ENCODE measurements at regions of chr17 and their contacts with region 1.

Region 1: DNA sequence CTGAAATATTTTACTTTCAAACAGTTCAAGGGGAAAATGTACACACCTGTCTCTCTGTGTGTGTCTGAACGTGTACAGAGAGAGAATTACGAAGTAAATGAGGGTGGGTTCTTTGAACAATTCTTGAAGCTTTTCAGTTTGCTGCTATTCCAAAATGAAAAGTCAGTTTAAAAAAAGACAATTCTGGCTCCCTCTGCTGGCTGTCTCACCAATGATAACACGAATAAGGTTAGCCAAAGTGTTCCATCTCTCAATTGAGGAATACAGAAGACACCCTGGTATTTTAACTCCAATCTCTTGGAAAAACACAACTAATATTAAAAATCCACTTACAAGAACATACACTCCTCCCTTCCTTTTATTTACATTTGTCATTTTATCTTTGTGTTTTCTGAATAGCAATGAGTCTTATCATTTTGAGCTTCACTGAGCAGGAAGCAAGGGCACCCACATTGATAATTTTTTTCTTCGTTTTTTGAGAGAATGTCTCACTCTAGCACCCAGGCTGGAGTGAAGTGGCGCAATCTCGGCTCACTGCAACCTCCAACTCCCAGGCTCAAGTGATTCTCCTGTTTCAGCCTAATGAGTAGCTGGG is 20.5 kb downstream of the EFTUD2 start:
- DNase-seq: no peak
- H3K4me3 Mint-ChIP-seq: no peak overlapping the region
- H3K27ac Mint-ChIP-seq: no peak overlapping the region
- H3K4me1 Mint-ChIP-seq: peaks cover 2% of the 10 kb centered on the region
- H3K27me3 Mint-ChIP-seq: no peaks in the 10 kb centered on the region

Region 2: GRCh38 chr17:44722254-44722653 is 156.5 kb before region 1 on chr17:
- CTCF ChIA-PET with region 1: no interaction called
- POLR2A ChIA-PET with region 1: no interaction called
- DNase-seq: no peak
- H3K4me3 Mint-ChIP-seq: no peak overlapping the region
- H3K27ac Mint-ChIP-seq: no peak overlapping the region
- H3K4me1 Mint-ChIP-seq: no peaks in the 10 kb centered on the region
- H3K27me3 Mint-ChIP-seq: no peaks in the 10 kb centered on the region

Region 3: DNA sequence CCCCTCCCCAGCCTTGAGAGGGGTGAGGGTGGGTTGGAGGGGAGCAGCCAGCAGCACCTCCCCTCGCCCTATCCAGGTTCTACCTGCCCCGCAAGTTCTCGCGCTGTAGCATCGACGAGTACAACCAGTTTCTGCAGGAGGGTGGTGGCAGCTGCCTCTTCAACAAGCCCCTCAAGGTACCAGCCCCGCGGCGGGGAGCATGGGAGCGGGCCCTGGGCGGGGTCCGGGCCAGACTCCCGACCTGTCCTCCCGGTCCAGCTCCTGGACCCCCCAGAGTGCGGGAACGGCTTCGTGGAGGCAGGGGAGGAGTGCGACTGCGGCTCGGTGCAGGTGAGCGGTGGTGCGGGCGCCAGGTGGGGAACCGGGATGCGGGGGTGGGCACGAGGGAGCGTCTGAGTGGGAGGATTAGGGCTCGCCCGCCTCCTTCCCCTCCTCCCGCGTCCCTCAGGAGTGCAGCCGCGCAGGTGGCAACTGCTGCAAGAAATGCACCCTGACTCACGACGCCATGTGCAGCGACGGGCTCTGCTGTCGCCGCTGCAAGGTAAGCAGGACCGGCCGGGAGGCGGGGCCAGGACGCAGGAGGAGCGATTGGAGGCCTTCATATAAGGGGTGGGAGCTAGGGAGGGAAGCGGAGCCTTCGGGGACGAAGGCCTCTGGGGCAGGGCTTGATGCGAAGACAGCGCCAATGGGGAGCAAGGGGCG is 103.4 kb before region 1 on chr17:
- CTCF ChIA-PET with region 1: interaction called, 16 read pairs
- POLR2A ChIA-PET with region 1: no interaction called
- DNase-seq: peak; percentile 98
- H3K4me3 Mint-ChIP-seq: peak overlapping the region; percentile 75
- H3K27ac Mint-ChIP-seq: peak overlapping the region; percentile 52
- H3K4me1 Mint-ChIP-seq: peaks cover 15% of the 10 kb centered on the region
- H3K27me3 Mint-ChIP-seq: peaks cover 8% of the 10 kb centered on the region

Region 4: GRCh38 chr17:44864866-44865660 is 13.7 kb before region 1 on chr17:
- CTCF ChIA-PET with region 1: interaction called, 31 read pairs
- POLR2A ChIA-PET with region 1: interaction called, 3 read pairs
- DNase-seq: peak; percentile 69
- H3K4me3 Mint-ChIP-seq: no peak overlapping the region
- H3K27ac Mint-ChIP-seq: no peak overlapping the region
- H3K4me1 Mint-ChIP-seq: no peaks in the 10 kb centered on the region
- H3K27me3 Mint-ChIP-seq: no peaks in the 10 kb centered on the region

Measured in activated CD4-positive, alpha-beta memory T cell treated with anti-CD3 and anti-CD28 coated beads, Interleukin-2, amount 10 ng/mL, durations not matched to agents 7 days and 5 days (primary cell).